ENCODE measurements at regions of chr19 and their contacts with region 1.

Region 1: GRCh38 chr19:9796113-9796773 is 22.6 kb downstream of the FBXL12 start:
- DNase-seq: peak; percentile 91
- ATAC-seq: peak; percentile 45
- H3K4me3 Mint-ChIP-seq: no peak overlapping the region
- H3K27ac Mint-ChIP-seq: peak overlapping the region; percentile 5
- H3K4me1 Mint-ChIP-seq: peaks cover 22% of the 10 kb centered on the region
- H3K27me3 Mint-ChIP-seq: no peaks in the 10 kb centered on the region

Region 2: GRCh38 chr19:9140159-9140874 is 655.9 kb before region 1 on chr19 and contains the start of gene ZNF317:
- CTCF ChIA-PET with region 1: no interaction called
- POLR2A ChIA-PET with region 1: no interaction called
- intact Hi-C with region 1: loop called (anchors 1 to 2 kb)
- DNase-seq: peak; percentile 94
- ATAC-seq: peak; percentile 93
- H3K4me3 Mint-ChIP-seq: peak within 1 kb of the TSS; percentile 99
- H3K27ac Mint-ChIP-seq: peak within 1 kb of the TSS; percentile 96
- H3K4me1 Mint-ChIP-seq: peaks cover 38% of the 10 kb centered on the region
- H3K27me3 Mint-ChIP-seq: peaks cover 1% of the 10 kb centered on the region
- total RNA-seq, gene ZNF317: 39.0 to 39.8 TPM

Region 3: GRCh38 chr19:9323919-9324583 is 472.2 kb before region 1 on chr19 and contains the start of gene ZNF559:
- CTCF ChIA-PET with region 1: no interaction called
- POLR2A ChIA-PET with region 1: no interaction called
- intact Hi-C with region 1: loop called (anchors 1 to 10 kb)
- DNase-seq: peak; percentile 97
- ATAC-seq: peak; percentile 99
- H3K4me3 Mint-ChIP-seq: peak within 1 kb of the TSS; percentile 84
- H3K27ac Mint-ChIP-seq: peak within 1 kb of the TSS; percentile 96
- H3K4me1 Mint-ChIP-seq: peaks cover 23% of the 10 kb centered on the region
- H3K27me3 Mint-ChIP-seq: no peaks in the 10 kb centered on the region
- total RNA-seq, gene ZNF559: 11.7 to 13.0 TPM

Region 4: GRCh38 chr19:9584073-9584833 is 212.0 kb before region 1 on chr19 and contains the start of gene ZNF121:
- CTCF ChIA-PET with region 1: interaction called, 5 read pairs
- POLR2A ChIA-PET with region 1: no interaction called
- intact Hi-C with region 1: loop called (anchors 1 kb)
- DNase-seq: peak; percentile 91
- ATAC-seq: peak; percentile 82
- H3K4me3 Mint-ChIP-seq: peak within 1 kb of the TSS; percentile 93
- H3K27ac Mint-ChIP-seq: peak within 1 kb of the TSS; percentile 94
- H3K4me1 Mint-ChIP-seq: peaks cover 29% of the 10 kb centered on the region
- H3K27me3 Mint-ChIP-seq: peaks cover 4% of the 10 kb centered on the region
- total RNA-seq, gene ZNF121: 71.4 to 75.3 TPM

Region 5: GRCh38 chr19:9768175-9769112 is 27.8 kb before region 1 on chr19 and contains the start of gene ZNF846:
- CTCF ChIA-PET with region 1: interaction called, 6 read pairs
- POLR2A ChIA-PET with region 1: no interaction called
- intact Hi-C with region 1: loop called (anchors 1 kb)
- DNase-seq: peak; percentile 96
- ATAC-seq: peak; percentile 98
- H3K4me3 Mint-ChIP-seq: peak within 1 kb of the TSS; percentile 84
- H3K27ac Mint-ChIP-seq: peak within 1 kb of the TSS; percentile 90
- H3K4me1 Mint-ChIP-seq: peaks cover 7% of the 10 kb centered on the region
- H3K27me3 Mint-ChIP-seq: no peaks in the 10 kb centered on the region
- total RNA-seq, gene ZNF846: 5.3 to 6.4 TPM

Region 6: DNA sequence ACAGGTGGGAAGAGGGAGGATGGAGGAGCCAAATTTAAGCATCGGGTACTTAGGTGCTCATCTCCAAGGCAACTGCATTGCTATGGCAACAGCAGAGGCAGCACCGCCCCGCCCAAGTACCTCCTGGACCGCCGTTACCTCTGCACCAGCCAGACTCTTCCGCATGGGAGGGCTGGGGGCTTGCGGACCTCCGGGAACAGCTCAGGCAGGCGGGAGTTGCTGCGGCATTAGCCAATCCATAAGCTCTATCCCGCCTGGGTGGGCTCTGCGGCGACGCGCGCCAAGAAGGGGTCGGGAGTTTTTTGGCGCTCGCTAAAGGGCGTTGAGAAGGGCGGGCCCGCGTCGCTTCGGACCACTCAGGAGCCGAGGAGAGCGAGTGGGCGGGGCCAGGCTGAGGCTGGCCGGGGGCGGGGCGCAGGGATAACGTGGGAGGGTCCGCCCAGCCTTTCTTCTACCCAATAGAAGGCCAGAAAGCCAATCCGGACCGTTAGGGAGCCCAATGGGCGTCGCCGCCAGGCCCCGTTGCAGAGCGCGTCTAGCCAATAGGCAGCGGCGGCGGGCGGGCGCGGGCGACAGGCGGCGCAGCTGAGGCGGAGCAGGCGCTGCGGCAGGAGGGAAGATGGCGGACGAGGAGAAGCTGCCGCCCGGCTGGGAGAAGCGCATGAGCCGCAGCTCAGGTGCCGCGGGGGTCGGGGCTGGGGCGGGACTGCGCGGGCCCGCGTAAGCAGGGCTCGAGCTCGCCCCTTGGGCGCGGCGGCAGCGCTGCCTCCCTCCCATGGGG is 38.7 kb after region 1 on chr19 and contains the start of gene PIN1:
- CTCF ChIA-PET with region 1: no interaction called
- POLR2A ChIA-PET with region 1: no interaction called
- intact Hi-C with region 1: loop called (anchors 1 kb)
- DNase-seq: peak; percentile 100
- ATAC-seq: peak; percentile 99
- H3K4me3 Mint-ChIP-seq: peak within 1 kb of the TSS; percentile 86
- H3K27ac Mint-ChIP-seq: peak within 1 kb of the TSS; percentile 88
- H3K4me1 Mint-ChIP-seq: peaks cover 20% of the 10 kb centered on the region
- H3K27me3 Mint-ChIP-seq: no peaks in the 10 kb centered on the region
- total RNA-seq, gene PIN1: 70.4 to 74.2 TPM

Region 7: DNA sequence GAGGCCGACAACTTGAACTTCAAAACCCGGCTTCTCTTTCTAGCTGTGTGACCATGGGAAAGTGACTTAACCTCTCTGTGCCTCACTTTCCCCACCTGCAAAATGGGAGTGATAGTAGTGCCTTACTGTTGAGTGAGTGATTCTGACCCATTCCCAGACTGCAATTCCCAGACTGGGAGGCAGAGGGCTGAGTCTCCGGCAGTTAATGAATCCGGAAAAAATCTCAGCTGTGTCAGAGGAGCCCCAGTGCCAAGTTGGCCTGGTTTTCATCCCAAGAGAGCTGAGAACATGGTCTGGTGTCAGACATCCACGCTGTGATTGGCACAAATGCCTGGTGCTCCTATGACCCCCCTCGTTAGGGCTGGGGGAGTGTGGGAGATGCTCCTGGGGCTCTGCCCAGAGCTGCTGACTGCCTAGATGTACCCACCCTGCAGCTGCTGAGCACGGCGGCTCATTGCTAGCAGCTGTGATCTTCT is 88.9 kb after region 1 on chr19:
- CTCF ChIA-PET with region 1: no interaction called
- POLR2A ChIA-PET with region 1: no interaction called
- intact Hi-C with region 1: no loop called
- DNase-seq: no peak
- ATAC-seq: no peak
- H3K4me3 Mint-ChIP-seq: no peak overlapping the region
- H3K27ac Mint-ChIP-seq: no peak overlapping the region
- H3K4me1 Mint-ChIP-seq: no peaks in the 10 kb centered on the region
- H3K27me3 Mint-ChIP-seq: no peaks in the 10 kb centered on the region

Region 8: GRCh38 chr19:10517760-10518443 is 721.7 kb after region 1 on chr19:
- CTCF ChIA-PET with region 1: no interaction called
- POLR2A ChIA-PET with region 1: no interaction called
- intact Hi-C with region 1: no loop called
- DNase-seq: no peak
- ATAC-seq: peak; percentile 43
- H3K4me3 Mint-ChIP-seq: peak overlapping the region; percentile 15
- H3K27ac Mint-ChIP-seq: no peak overlapping the region
- H3K4me1 Mint-ChIP-seq: peaks cover 24% of the 10 kb centered on the region
- H3K27me3 Mint-ChIP-seq: peaks cover 53% of the 10 kb centered on the region

Measured in activated CD4-positive, alpha-beta T cell treated with anti-CD3 and anti-CD28 coated beads for 36 hours (primary cell).